RWPE1 (cell line): ENCODE measurements at regions of chr1 and their contacts with region 1.

Region 1: DNA sequence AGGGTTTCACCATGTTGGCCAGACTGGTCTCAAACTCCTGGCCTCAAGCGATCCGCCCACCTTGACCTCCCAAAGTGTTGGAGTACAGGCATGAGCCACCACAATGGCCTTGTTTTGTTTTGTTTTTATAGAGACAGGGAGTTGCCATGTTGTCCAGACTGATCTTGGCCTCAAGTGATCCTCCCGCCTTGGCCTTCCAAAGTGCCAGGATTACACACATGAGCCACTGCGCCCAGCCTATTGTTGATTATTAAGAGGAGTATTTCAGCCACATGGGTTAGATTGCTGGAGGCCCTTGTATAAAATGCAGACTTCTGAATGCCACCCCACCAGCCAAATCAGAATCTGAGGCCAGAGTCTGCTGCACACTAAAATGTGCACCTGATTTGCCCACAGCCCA is 57.2 kb upstream of the ANGPTL1 start:
- DNase-seq: no peak
- H3K27ac ChIP-seq: no peak overlapping the region
- CTCF ChIP-seq: no peak

Region 2: DNA sequence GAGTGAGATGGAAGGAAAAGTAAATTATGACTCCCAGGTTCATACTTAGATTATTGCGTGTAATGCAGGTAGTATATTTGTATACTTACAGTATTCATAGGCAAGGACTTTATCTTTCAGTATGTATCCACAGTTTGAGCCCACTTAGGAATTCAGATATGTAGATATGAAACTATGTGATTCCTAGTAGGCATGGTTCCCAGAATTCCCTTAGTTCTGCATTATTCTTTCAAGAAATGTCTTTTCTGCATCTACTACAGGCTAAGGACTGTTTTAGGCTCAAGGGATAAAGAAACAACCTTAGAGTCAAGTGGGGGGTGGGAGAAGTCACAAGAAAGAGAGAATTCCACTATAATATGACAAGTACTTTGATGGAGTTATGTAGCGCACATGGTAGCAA is 70.9 kb before region 1 on chr1:
- CTCF ChIA-PET with region 1: no interaction called
- POLR2A ChIA-PET with region 1: interaction called, 14 read pairs
- DNase-seq: no peak
- H3K27ac ChIP-seq: no peak overlapping the region
- CTCF ChIP-seq: no peak